CD8-positive, alpha-beta T cell (primary cell): ENCODE measurements at regions of chr4 and their contacts with region 1.

Region 1: GRCh38 chr4:108118490-108118889 is 50.2 kb downstream of the LEF1 start:
- DNase-seq: peak in 4 of 9 experiments; percentile 33 to 67 (median 54)
- ATAC-seq: peak; percentile 58
- H3K4me3 ChIP-seq: no peak overlapping the region
- H3K4me3 Mint-ChIP-seq: peak overlapping the region; percentile 60
- H3K27ac ChIP-seq: peak overlapping the region in 1 of 2 experiments; percentile 41
- H3K27ac Mint-ChIP-seq: peak overlapping the region; percentile 98
- H3K4me1 ChIP-seq: peaks cover 98% of the 10 kb centered on the region
- H3K4me1 Mint-ChIP-seq: peaks cover 90% of the 10 kb centered on the region
- H3K27me3 ChIP-seq: no peaks in the 10 kb centered on the region
- H3K27me3 Mint-ChIP-seq: no peaks in the 10 kb centered on the region
- CTCF ChIP-seq: no peak

Region 2: DNA sequence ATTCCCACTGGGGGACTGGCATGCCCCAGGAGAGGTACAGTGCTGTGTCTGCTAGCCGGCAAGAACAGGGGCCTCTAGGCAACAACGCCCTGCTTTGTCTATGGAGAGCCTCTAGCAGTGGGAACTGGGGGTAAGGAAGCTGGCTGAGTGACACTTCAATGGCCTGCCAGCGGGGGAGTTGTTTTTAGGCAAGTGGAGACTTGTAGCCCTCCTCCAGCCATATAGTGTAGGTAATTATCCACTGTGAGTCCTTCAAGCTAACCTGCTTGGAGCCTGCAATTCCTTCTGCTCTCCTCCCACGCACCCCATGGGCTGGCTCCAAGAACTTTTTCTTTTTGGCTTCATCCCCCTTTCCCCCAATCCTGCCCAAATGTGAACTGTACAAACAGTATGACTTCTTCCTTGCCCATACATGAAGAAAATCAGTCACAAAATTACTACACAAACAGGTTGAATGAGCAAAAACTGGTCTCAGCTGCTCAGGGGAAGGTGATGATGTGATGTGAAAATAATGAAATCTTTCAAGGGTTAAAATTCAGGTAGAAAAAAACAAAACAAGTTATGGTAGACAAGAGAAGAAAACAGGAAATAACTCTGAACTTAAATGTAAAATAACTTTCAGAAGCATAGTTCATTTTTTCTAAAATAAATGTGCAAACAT is 17.2 kb after region 1 on chr4:
- CTCF ChIA-PET with region 1: interaction called, 4 read pairs
- POLR2A ChIA-PET with region 1: interaction called, 19 read pairs
- intact Hi-C with region 1: loop called in 1 of 2 experiments (anchors 1 kb)
- DNase-seq: peak in 1 of 9 experiments; percentile 22
- ATAC-seq: peak; percentile 10
- H3K4me3 ChIP-seq: peak overlapping the region; percentile 4 to 26
- H3K4me3 Mint-ChIP-seq: peak overlapping the region; percentile 65
- H3K27ac ChIP-seq: peak overlapping the region; percentile 26 to 30
- H3K27ac Mint-ChIP-seq: peak overlapping the region; percentile 94
- H3K4me1 ChIP-seq: peaks cover 98% of the 10 kb centered on the region
- H3K4me1 Mint-ChIP-seq: peaks cover 85% of the 10 kb centered on the region
- H3K27me3 ChIP-seq: no peaks in the 10 kb centered on the region
- H3K27me3 Mint-ChIP-seq: no peaks in the 10 kb centered on the region
- CTCF ChIP-seq: no peak

Region 3: GRCh38 chr4:108141213-108141950 is 22.9 kb after region 1 on chr4:
- CTCF ChIA-PET with region 1: interaction called, 3 read pairs
- POLR2A ChIA-PET with region 1: interaction called, 19 read pairs
- intact Hi-C with region 1: loop called (anchors 2 kb)
- DNase-seq: peak in 3 of 9 experiments; percentile 33 to 45 (median 38)
- ATAC-seq: peak; percentile 6
- H3K4me3 ChIP-seq: peak overlapping the region in 1 of 2 experiments; percentile 10
- H3K4me3 Mint-ChIP-seq: peak overlapping the region; percentile 73
- H3K27ac ChIP-seq: peak overlapping the region; percentile 7 to 9
- H3K27ac Mint-ChIP-seq: peak overlapping the region; percentile 94
- H3K4me1 ChIP-seq: peaks cover 99% of the 10 kb centered on the region
- H3K4me1 Mint-ChIP-seq: peaks cover 90% of the 10 kb centered on the region
- H3K27me3 ChIP-seq: no peaks in the 10 kb centered on the region
- H3K27me3 Mint-ChIP-seq: no peaks in the 10 kb centered on the region
- CTCF ChIP-seq: no peak

Region 4: GRCh38 chr4:108160741-108161352 is 42.4 kb after region 1 on chr4:
- CTCF ChIA-PET with region 1: interaction called, 3 read pairs
- POLR2A ChIA-PET with region 1: interaction called, 12 read pairs
- intact Hi-C with region 1: loop called in 1 of 2 experiments (anchors 5 kb)
- DNase-seq: peak in 2 of 9 experiments; percentile 40 to 65
- ATAC-seq: peak; percentile 40
- H3K4me3 ChIP-seq: peak overlapping the region; percentile 73 to 78
- H3K4me3 Mint-ChIP-seq: peak overlapping the region; percentile 83
- H3K27ac ChIP-seq: peak overlapping the region in 1 of 2 experiments; percentile 28
- H3K27ac Mint-ChIP-seq: peak overlapping the region; percentile 91
- H3K4me1 ChIP-seq: peaks cover 37% of the 10 kb centered on the region
- H3K4me1 Mint-ChIP-seq: peaks cover 71% of the 10 kb centered on the region
- H3K27me3 ChIP-seq: peaks cover 0 to 8% of the 10 kb centered on the region in 2 experiments
- H3K27me3 Mint-ChIP-seq: no peaks in the 10 kb centered on the region
- CTCF ChIP-seq: no peak